ENCODE measurements at regions of chr5 and their contacts with region 1.

Region 1: GRCh38 chr5:79020861-79021561 is 35.9 kb upstream of the ARSB start:
- DNase-seq: peak in 1 of 2 donors; percentile 60
- ATAC-seq: peak; percentile 60 to 81 (median 67)
- H3K4me3 ChIP-seq: no peak overlapping the region
- H3K4me3 Mint-ChIP-seq: no peak overlapping the region
- H3K27ac ChIP-seq: no peak overlapping the region
- H3K27ac Mint-ChIP-seq: no peak overlapping the region
- H3K4me1 ChIP-seq: peaks cover 4% of the 10 kb centered on the region
- H3K4me1 Mint-ChIP-seq: peaks cover 14 to 15% of the 10 kb centered on the region in 2 donors
- H3K27me3 ChIP-seq: peaks cover 14% of the 10 kb centered on the region
- H3K27me3 Mint-ChIP-seq: peaks cover 34 to 84% of the 10 kb centered on the region in 2 donors
- CTCF ChIP-seq: peak; percentile 44

Region 2: GRCh38 chr5:79093762-79094161 is 72.8 kb after region 1 on chr5:
- intact Hi-C with region 1: no loop called
- DNase-seq: no peak
- ATAC-seq: no peak
- H3K4me3 ChIP-seq: no peak overlapping the region
- H3K4me3 Mint-ChIP-seq: no peak overlapping the region
- H3K27ac ChIP-seq: no peak overlapping the region
- H3K27ac Mint-ChIP-seq: no peak overlapping the region
- H3K4me1 ChIP-seq: no peaks in the 10 kb centered on the region
- H3K4me1 Mint-ChIP-seq: no peaks in the 10 kb centered on the region
- H3K27me3 ChIP-seq: no peaks in the 10 kb centered on the region
- H3K27me3 Mint-ChIP-seq: peaks cover 5 to 7% of the 10 kb centered on the region in 2 donors
- CTCF ChIP-seq: no peak

Region 3: GRCh38 chr5:79464695-79465332 is 443.8 kb after region 1 on chr5:
- intact Hi-C with region 1: loop called (anchors 2 kb)
- DNase-seq: peak in 1 of 2 donors; percentile 43
- ATAC-seq: peak in 2 of 3 donors; percentile 49 to 59
- H3K4me3 ChIP-seq: no peak overlapping the region
- H3K4me3 Mint-ChIP-seq: no peak overlapping the region
- H3K27ac ChIP-seq: no peak overlapping the region
- H3K27ac Mint-ChIP-seq: no peak overlapping the region
- H3K4me1 ChIP-seq: no peaks in the 10 kb centered on the region
- H3K4me1 Mint-ChIP-seq: peaks cover 0 to 4% of the 10 kb centered on the region in 2 donors
- H3K27me3 ChIP-seq: peaks cover 2% of the 10 kb centered on the region
- H3K27me3 Mint-ChIP-seq: peaks cover 0 to 4% of the 10 kb centered on the region in 2 donors
- CTCF ChIP-seq: peak; percentile 47

Region 4: DNA sequence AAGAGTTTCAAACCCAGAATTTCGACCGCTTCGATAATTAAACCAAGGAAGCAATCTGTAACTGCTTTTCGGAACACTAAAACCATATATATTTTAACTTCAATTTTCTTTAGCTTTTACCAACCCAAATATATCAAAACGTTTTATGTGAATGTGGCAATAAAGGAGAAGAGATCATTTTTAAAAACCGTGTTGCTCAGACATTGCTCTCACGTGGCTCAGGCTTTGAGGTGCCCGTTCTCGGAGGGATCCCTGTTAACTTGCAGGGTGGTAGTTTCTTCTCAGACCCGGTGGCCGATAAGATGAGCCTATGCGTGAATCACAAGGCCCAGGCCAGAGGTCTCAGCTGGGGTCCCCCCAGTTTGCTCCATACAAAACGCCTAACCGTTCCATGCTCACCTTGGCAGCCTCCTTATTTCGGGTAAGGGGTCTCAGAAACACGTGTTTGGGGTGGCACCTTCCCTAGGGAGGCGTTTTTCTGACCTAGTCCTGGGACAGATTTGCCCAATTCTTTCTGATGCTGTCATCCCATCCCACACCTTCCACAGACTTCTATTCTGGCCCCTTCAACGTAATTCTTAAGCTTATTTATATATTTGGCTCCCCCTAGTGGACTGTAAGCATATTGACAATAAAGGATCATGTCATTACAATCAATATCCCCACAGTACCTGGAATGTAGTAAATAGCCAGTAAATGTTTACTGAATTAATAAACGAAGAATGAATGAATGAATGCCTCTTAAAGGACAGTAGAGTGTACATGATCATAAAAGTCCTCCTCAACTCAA is 1062.3 kb after region 1 on chr5:
- intact Hi-C with region 1: loop called (anchors 10 kb)
- DNase-seq: peak in 1 of 2 donors; percentile 70
- ATAC-seq: peak; percentile 81 to 89 (median 86)
- H3K4me3 ChIP-seq: peak overlapping the region; percentile 4
- H3K4me3 Mint-ChIP-seq: peak overlapping the region; percentile 90
- H3K27ac ChIP-seq: peak overlapping the region; percentile 19
- H3K27ac Mint-ChIP-seq: peak overlapping the region; percentile 69 to 75
- H3K4me1 ChIP-seq: peaks cover 9% of the 10 kb centered on the region
- H3K4me1 Mint-ChIP-seq: peaks cover 6 to 8% of the 10 kb centered on the region in 2 donors
- H3K27me3 ChIP-seq: no peaks in the 10 kb centered on the region
- H3K27me3 Mint-ChIP-seq: peaks cover 4 to 8% of the 10 kb centered on the region in 2 donors
- CTCF ChIP-seq: peak; percentile 77